Transverse colon (tissue), 4 donors: ENCODE measurements at regions of chr1 and their contacts with region 1.

Region 1: GRCh38 chr1:9196129-9197040 is 38.2 kb upstream of the H6PD start:
- DNase-seq: peak; percentile 74
- H3K4me3 ChIP-seq: no peak overlapping the region
- H3K27ac ChIP-seq: peak overlapping the region in 1 of 4 donors; percentile 33
- H3K4me1 ChIP-seq: peaks cover 0 to 21% (median 11%) of the 10 kb centered on the region in 4 donors
- H3K27me3 ChIP-seq: peaks cover 52% of the 10 kb centered on the region
- CTCF ChIP-seq: peak; percentile 76 to 82 (median 80)
- EP300 ChIP-seq: no peak
- POLR2A ChIP-seq: no peak

Region 2: GRCh38 chr1:8702850-8703810 is 493.3 kb before region 1 on chr1:
- in situ Hi-C with region 1: no loop called
- intact Hi-C with region 1: no loop called
- DNase-seq: peak; percentile 93
- H3K4me3 ChIP-seq: peak overlapping the region; percentile 60 to 90 (median 72)
- H3K27ac ChIP-seq: peak overlapping the region; percentile 94 to 98 (median 96)
- H3K4me1 ChIP-seq: peaks cover 12 to 71% (median 33%) of the 10 kb centered on the region in 4 donors
- H3K27me3 ChIP-seq: no peaks in the 10 kb centered on the region
- CTCF ChIP-seq: peak in 3 of 5 experiments; percentile 7 to 44 (median 27)
- EP300 ChIP-seq: no peak
- POLR2A ChIP-seq: peak; percentile 45

Region 3: GRCh38 chr1:9110669-9111356 is 85.6 kb before region 1 on chr1:
- in situ Hi-C with region 1: loop called in 2 of 4 experiments (anchors 5 kb)
- intact Hi-C with region 1: loop called (anchors 5 kb)
- DNase-seq: peak; percentile 88
- H3K4me3 ChIP-seq: no peak overlapping the region
- H3K27ac ChIP-seq: no peak overlapping the region
- H3K4me1 ChIP-seq: peaks cover 0 to 13% (median 4%) of the 10 kb centered on the region in 4 donors
- H3K27me3 ChIP-seq: no peaks in the 10 kb centered on the region
- CTCF ChIP-seq: peak; percentile 89 to 94 (median 91)
- EP300 ChIP-seq: no peak
- POLR2A ChIP-seq: no peak

Region 4: GRCh38 chr1:9145021-9145668 is 51.2 kb before region 1 on chr1:
- in situ Hi-C with region 1: loop called in 1 of 4 experiments (anchors 10 kb)
- intact Hi-C with region 1: no loop called
- DNase-seq: no peak
- H3K4me3 ChIP-seq: no peak overlapping the region
- H3K27ac ChIP-seq: no peak overlapping the region
- H3K4me1 ChIP-seq: peaks cover 0 to 5% (median 0%) of the 10 kb centered on the region in 4 donors
- H3K27me3 ChIP-seq: no peaks in the 10 kb centered on the region
- CTCF ChIP-seq: no peak
- EP300 ChIP-seq: no peak
- POLR2A ChIP-seq: no peak